ENCODE measurements at regions of chr6 and their contacts with region 1.

Region 1: DNA sequence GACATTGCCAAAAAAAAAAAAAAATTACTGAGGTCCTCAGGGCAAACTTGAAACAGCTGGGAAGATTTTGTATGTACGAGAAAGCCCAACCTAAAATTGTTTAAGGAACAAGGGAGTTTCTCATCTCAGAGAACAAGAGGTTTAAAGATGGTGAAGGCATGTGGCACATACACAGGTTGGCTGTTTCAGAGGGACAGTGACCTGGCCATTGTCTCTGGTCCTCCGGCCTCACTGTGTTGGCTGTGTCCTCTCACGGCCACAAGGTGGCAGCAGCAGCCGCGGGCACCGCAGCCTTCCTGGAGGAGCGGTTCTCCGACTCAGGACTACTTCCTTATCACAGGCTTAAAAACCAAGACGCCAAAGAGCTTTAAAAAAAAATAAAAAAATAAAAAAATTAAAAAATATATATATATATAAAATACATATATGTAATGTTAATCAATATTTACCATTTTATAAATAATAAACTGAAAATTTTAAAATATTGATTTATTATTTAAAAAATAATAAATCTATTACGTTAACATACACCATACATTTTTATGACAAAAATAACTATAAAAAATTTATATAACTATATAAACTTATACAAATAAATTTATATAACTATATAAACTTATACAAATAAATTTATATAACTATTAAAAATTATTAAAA is 52.8 kb downstream of the GTF2H5 start:
- DNase-seq: peak; percentile 23 to 73 (median 60)
- ATAC-seq: peak; percentile 91
- H3K4me3 ChIP-seq: no peak overlapping the region
- H3K4me3 Mint-ChIP-seq: no peak overlapping the region
- H3K27ac ChIP-seq: no peak overlapping the region
- H3K27ac Mint-ChIP-seq: peak overlapping the region in 1 of 9 donors; percentile 63
- H3K4me1 ChIP-seq: no peaks in the 10 kb centered on the region
- H3K4me1 Mint-ChIP-seq: peaks cover 0 to 13% (median 0%) of the 10 kb centered on the region in 7 donors
- H3K27me3 ChIP-seq: no peaks in the 10 kb centered on the region
- H3K27me3 Mint-ChIP-seq: peaks cover 0 to 4% (median 0%) of the 10 kb centered on the region in 5 donors

Region 2: GRCh38 chr6:158290659-158291058 is 69.7 kb after region 1 on chr6:
- CTCF ChIA-PET with region 1: interaction called, 3 read pairs
- POLR2A ChIA-PET with region 1: no interaction called
- intact Hi-C with region 1: loop called in 1 of 2 experiments (anchors 1 kb)
- DNase-seq: peak in 8 of 9 donors; percentile 20 to 63 (median 52)
- ATAC-seq: peak; percentile 96
- H3K4me3 ChIP-seq: peak overlapping the region; percentile 33
- H3K4me3 Mint-ChIP-seq: peak overlapping the region; percentile 61 to 93 (median 83)
- H3K27ac ChIP-seq: peak overlapping the region; percentile 23
- H3K27ac Mint-ChIP-seq: peak overlapping the region; percentile 28 to 95 (median 86)
- H3K4me1 ChIP-seq: peaks cover 10 to 33% of the 10 kb centered on the region in 2 donors
- H3K4me1 Mint-ChIP-seq: peaks cover 25 to 64% (median 47%) of the 10 kb centered on the region in 7 donors
- H3K27me3 ChIP-seq: no peaks in the 10 kb centered on the region
- H3K27me3 Mint-ChIP-seq: no peaks in the 10 kb centered on the region

Region 3: GRCh38 chr6:158452182-158452581 is 231.3 kb after region 1 on chr6:
- CTCF ChIA-PET with region 1: no interaction called
- POLR2A ChIA-PET with region 1: no interaction called
- intact Hi-C with region 1: loop called in 1 of 2 experiments (anchors 5 kb)
- DNase-seq: no peak
- ATAC-seq: no peak
- H3K4me3 ChIP-seq: no peak overlapping the region
- H3K4me3 Mint-ChIP-seq: no peak overlapping the region
- H3K27ac ChIP-seq: no peak overlapping the region
- H3K27ac Mint-ChIP-seq: no peak overlapping the region
- H3K4me1 ChIP-seq: no peaks in the 10 kb centered on the region
- H3K4me1 Mint-ChIP-seq: no peaks in the 10 kb centered on the region
- H3K27me3 ChIP-seq: no peaks in the 10 kb centered on the region
- H3K27me3 Mint-ChIP-seq: no peaks in the 10 kb centered on the region

Region 4: DNA sequence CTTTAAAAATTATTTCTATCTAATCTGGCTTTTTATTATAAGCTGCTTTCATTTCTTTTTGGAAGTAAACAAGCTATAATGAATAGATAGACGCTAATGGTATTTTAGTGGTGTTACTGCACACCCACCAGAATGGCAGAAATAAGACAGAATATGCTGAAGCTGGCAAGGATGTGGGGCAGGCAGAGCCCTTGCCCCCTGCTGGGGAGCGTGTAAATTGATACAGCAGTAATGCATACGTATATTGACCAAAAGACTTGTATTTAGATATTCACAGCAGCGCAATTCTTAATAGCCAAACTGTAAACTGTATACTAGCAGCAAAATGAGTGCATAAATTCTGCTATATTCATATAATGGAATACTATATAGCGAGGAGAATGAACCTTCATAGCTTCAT is 374.3 kb after region 1 on chr6:
- CTCF ChIA-PET with region 1: interaction called, 3 read pairs
- POLR2A ChIA-PET with region 1: no interaction called
- intact Hi-C with region 1: loop called in 1 of 2 experiments (anchors 1 kb)
- DNase-seq: peak in 5 of 9 donors; percentile 7 to 32 (median 21)
- ATAC-seq: peak; percentile 66
- H3K4me3 ChIP-seq: no peak overlapping the region
- H3K4me3 Mint-ChIP-seq: no peak overlapping the region
- H3K27ac ChIP-seq: no peak overlapping the region
- H3K27ac Mint-ChIP-seq: peak overlapping the region in 1 of 9 donors; percentile 1
- H3K4me1 ChIP-seq: no peaks in the 10 kb centered on the region
- H3K4me1 Mint-ChIP-seq: peaks cover 0 to 18% (median 4%) of the 10 kb centered on the region in 7 donors
- H3K27me3 ChIP-seq: no peaks in the 10 kb centered on the region
- H3K27me3 Mint-ChIP-seq: no peaks in the 10 kb centered on the region

Region 5: GRCh38 chr6:158660333-158660754 is 439.4 kb after region 1 on chr6:
- CTCF ChIA-PET with region 1: no interaction called
- POLR2A ChIA-PET with region 1: no interaction called
- intact Hi-C with region 1: loop called in 1 of 2 experiments (anchors 1 kb)
- DNase-seq: peak in 7 of 9 donors; percentile 62 to 82 (median 78)
- ATAC-seq: peak; percentile 80
- H3K4me3 ChIP-seq: no peak overlapping the region
- H3K4me3 Mint-ChIP-seq: peak overlapping the region; percentile 25 to 77 (median 70)
- H3K27ac ChIP-seq: peak overlapping the region; percentile 54
- H3K27ac Mint-ChIP-seq: peak overlapping the region; percentile 29 to 97 (median 90)
- H3K4me1 ChIP-seq: peaks cover 9 to 36% of the 10 kb centered on the region in 2 donors
- H3K4me1 Mint-ChIP-seq: peaks cover 15 to 76% (median 62%) of the 10 kb centered on the region in 7 donors
- H3K27me3 ChIP-seq: no peaks in the 10 kb centered on the region
- H3K27me3 Mint-ChIP-seq: no peaks in the 10 kb centered on the region

Region 6: GRCh38 chr6:159450815-159451465 is 1230.0 kb after region 1 on chr6:
- CTCF ChIA-PET with region 1: no interaction called
- POLR2A ChIA-PET with region 1: no interaction called
- intact Hi-C with region 1: no loop called
- DNase-seq: no peak
- ATAC-seq: peak; percentile 12
- H3K4me3 ChIP-seq: no peak overlapping the region
- H3K4me3 Mint-ChIP-seq: no peak overlapping the region
- H3K27ac ChIP-seq: no peak overlapping the region
- H3K27ac Mint-ChIP-seq: no peak overlapping the region
- H3K4me1 ChIP-seq: no peaks in the 10 kb centered on the region
- H3K4me1 Mint-ChIP-seq: no peaks in the 10 kb centered on the region
- H3K27me3 ChIP-seq: no peaks in the 10 kb centered on the region
- H3K27me3 Mint-ChIP-seq: peaks cover 4 to 44% (median 27%) of the 10 kb centered on the region in 5 donors

Measured in naive thymus-derived CD4-positive, alpha-beta T cell (primary cell).